ENCODE measurements at regions of chr5 and their contacts with region 1.

Region 1: GRCh38 chr5:135437796-135438560 is 9.2 kb downstream of the DCANP1 start:
- DNase-seq: no peak

Region 2: GRCh38 chr5:135426102-135427082 is 11.6 kb before region 1 on chr5:
- CTCF ChIA-PET with region 1: interaction called, 13 read pairs
- POLR2A ChIA-PET with region 1: interaction called, 4 read pairs
- DNase-seq: peak; percentile 62

Region 3: DNA sequence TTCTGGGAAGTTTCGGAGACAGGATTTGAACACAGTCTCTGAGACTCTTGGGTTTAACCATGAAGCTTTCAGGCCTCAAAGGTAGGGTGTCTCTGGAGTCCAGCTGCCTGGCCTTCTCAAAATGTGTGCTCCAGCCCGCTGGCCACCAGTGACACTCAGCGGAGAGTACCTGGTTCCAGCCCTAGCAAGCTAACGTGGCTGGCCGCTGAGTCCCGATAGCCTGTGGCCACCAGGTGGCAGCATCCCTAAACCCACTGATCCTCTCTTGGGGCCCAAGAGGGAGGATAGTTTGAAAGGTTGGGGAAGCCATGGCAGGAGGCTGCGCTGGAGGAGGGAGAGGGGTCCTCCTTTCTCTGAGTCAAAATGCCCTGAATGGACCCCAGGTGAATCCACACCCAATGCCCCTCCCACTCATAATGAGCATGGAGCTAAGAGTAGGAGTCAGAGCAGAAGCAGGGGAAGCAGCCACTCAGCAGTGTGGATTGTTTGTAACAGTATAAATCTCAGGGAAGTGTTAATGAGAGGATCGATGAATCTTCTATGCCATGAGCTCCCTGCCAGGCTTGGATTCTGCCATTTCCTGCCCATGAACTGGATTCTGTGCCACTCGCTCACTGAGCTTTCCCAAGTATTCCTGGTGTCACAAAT is 19.6 kb after region 1 on chr5:
- CTCF ChIA-PET with region 1: interaction called, 13 read pairs
- POLR2A ChIA-PET with region 1: no interaction called
- DNase-seq: peak; percentile 83